Cardiac septum (tissue), 1 donor: ENCODE measurements at regions of chr1 and their contacts with region 1.

Region 1: GRCh38 chr1:32876341-32877210 is 5.9 kb upstream of the FNDC5 start:
- DNase-seq: peak; percentile 85

Region 2: DNA sequence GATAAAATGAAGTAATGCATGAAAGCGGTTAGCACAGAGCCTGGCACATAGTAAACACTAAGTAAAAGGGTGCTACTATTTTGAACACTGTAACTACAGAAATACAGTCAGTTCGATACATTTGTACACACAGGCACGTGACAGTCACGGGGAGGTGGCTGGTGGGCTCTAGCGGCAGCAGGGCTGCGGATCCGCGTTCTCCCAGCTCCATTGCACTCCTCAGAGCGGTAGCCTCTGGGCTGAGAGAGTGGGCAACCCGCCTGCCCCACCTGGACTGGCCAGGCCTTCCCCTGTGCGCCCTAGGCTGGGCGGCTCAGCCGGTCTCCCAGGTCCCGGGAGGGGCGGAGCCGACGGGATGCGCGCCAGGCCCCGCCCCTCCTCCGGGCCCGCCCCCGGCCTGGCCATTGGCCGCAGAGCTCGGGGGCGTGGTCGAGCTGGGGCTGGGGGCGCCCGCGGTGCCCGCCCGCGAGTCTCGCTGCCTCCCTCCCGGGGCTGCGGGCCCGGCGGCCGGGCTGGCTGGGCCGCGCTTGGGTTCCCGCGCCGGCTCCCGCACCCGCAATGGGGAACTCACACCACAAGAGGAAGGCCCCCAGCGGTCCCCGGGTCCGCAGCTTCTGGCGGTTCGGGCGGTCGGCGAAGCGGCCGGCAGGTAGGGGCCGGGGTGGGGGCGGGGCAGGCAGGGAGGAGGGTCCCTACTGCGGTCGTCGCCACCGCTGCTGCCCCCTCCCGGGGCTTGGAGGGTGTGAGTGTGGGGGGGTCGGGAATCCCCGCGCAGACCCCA is 122.9 kb before region 1 on chr1:
- intact Hi-C with region 1: no loop called
- DNase-seq: no peak

Region 3: GRCh38 chr1:33074193-33074945 is 197.8 kb after region 1 on chr1:
- intact Hi-C with region 1: no loop called
- DNase-seq: peak; percentile 44

Region 4: DNA sequence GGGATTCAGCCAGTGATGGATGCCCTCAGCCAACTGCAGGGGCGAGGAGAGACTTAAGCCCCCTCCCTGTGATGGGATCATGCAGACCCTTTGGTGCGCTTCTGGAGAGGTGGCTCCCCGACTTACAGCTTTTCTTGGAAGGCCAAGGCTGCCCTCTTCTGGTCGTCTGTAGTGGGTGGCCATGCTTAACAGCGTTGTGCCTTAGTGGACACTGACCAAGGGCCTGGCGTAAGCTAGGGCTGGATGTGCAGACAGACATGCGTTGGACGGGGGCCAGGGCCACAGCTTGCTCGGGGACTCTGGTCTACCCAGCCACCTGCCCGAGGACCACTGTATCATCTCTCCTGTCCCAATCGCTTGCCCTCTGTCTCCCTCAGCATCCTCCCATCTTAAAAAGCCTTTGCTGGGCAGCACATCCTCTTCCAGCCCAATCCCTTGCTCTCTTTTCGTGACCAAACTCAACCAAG is 209.8 kb after region 1 on chr1:
- intact Hi-C with region 1: loop called (anchors 2 kb)
- DNase-seq: peak; percentile 82